Activated B cell treated with CpG ODN at 0.5 μM for 24 hours (primary cell): ENCODE measurements at regions of chr12 and their contacts with region 1.

Region 1: GRCh38 chr12:90013409-90013808 is 304.8 kb upstream of the ATP2B1 start:
- DNase-seq: no peak
- ATAC-seq: peak; percentile 90
- H3K4me3 Mint-ChIP-seq: no peak overlapping the region
- H3K27ac Mint-ChIP-seq: no peak overlapping the region
- H3K4me1 Mint-ChIP-seq: peaks cover 16% of the 10 kb centered on the region
- H3K27me3 Mint-ChIP-seq: no peaks in the 10 kb centered on the region
- CTCF ChIP-seq: no peak

Region 2: DNA sequence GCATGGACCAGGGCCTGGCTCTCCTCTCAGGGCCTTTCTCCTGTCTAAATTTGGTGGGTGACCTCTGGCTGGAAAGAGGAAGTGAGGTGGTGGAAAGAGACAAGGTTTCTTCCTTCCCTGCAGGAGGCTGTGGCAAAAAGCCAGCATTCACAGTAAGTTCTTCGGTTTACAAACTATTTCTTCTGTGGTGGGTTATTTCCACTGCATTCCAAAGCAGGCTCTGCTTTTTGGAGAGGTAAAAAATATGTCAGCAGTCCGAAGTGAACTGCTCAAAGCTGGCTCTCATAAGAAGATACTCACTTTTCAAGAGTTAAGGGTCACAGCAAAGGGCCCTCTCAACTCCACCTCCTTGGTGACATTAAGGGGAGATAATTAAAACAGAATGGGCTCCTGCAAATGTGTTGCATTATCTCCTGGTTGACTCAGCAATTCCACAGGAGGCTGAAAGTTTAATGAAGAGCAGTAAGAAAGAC is 438.6 kb before region 1 on chr12:
- CTCF ChIA-PET with region 1: no interaction called
- POLR2A ChIA-PET with region 1: no interaction called
- intact Hi-C with region 1: no loop called
- DNase-seq: no peak
- ATAC-seq: no peak
- H3K4me3 Mint-ChIP-seq: no peak overlapping the region
- H3K27ac Mint-ChIP-seq: no peak overlapping the region
- H3K4me1 Mint-ChIP-seq: peaks cover 13% of the 10 kb centered on the region
- H3K27me3 Mint-ChIP-seq: no peaks in the 10 kb centered on the region
- CTCF ChIP-seq: no peak

Region 3: GRCh38 chr12:89618107-89618862 is 395.1 kb before region 1 on chr12:
- CTCF ChIA-PET with region 1: interaction called, 13 read pairs
- POLR2A ChIA-PET with region 1: no interaction called
- intact Hi-C with region 1: loop called (anchors 5 kb)
- DNase-seq: no peak
- ATAC-seq: peak; percentile 10
- H3K4me3 Mint-ChIP-seq: no peak overlapping the region
- H3K27ac Mint-ChIP-seq: peak overlapping the region; percentile 44
- H3K4me1 Mint-ChIP-seq: peaks cover 6% of the 10 kb centered on the region
- H3K27me3 Mint-ChIP-seq: no peaks in the 10 kb centered on the region
- CTCF ChIP-seq: no peak

Region 4: GRCh38 chr12:89856431-89856830 is 157.0 kb before region 1 on chr12:
- CTCF ChIA-PET with region 1: no interaction called
- POLR2A ChIA-PET with region 1: no interaction called
- intact Hi-C with region 1: loop called (anchors 5 kb)
- DNase-seq: no peak
- ATAC-seq: peak; percentile 86
- H3K4me3 Mint-ChIP-seq: peak overlapping the region; percentile 68
- H3K27ac Mint-ChIP-seq: peak overlapping the region; percentile 91
- H3K4me1 Mint-ChIP-seq: peaks cover 64% of the 10 kb centered on the region
- H3K27me3 Mint-ChIP-seq: no peaks in the 10 kb centered on the region
- CTCF ChIP-seq: no peak

Region 5: DNA sequence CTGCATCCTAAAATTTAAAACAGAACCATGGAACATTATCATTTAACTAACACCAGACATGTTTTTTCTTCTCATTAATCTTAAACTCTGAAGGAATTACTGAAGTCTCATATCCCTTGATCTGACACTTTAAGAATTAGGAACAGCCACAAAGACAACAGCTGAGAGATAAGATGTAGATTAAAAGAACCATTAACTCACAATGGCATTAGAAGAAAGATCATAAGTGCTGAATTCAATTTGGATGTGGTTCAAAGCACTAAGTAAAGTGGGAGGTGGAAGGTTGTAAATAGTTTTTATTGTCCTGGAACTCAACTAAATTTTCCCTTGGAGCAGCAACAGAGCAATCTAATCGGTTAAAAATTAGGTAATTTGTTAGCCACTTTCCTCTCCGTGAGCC is 105.8 kb before region 1 on chr12:
- CTCF ChIA-PET with region 1: no interaction called
- POLR2A ChIA-PET with region 1: no interaction called
- intact Hi-C with region 1: no loop called
- DNase-seq: no peak
- ATAC-seq: no peak
- H3K4me3 Mint-ChIP-seq: no peak overlapping the region
- H3K27ac Mint-ChIP-seq: no peak overlapping the region
- H3K4me1 Mint-ChIP-seq: no peaks in the 10 kb centered on the region
- H3K27me3 Mint-ChIP-seq: no peaks in the 10 kb centered on the region
- CTCF ChIP-seq: no peak

Region 6: DNA sequence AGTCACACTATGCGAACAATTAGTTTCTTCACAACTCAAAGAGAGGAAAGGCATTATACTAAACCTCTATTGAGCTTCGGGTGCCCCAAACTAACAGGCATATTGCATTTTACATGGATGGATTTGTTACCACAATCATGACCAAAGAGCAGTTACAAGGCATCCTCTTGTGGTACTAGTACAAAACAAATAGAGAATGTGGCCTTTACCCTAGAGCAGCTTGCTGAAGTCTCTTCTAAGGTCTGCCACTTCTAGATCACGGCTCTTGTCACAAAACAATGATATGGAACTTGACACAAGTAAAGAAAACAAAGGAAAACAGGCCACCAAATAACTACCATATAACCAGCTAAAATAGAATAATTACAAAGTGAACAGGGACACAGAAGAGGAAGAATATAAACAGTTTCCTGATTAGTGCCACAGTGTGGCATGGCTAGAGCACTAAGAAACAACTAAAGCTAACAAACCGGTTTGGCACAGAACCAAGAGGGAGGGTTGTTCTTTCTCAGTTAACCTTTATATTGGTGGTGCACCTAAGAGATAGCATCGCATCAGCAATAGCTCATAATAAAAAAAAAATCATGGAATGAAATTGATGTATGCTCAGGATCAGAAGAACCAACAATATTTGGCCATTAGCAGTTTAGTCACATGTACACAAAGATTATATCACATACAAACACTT is 95.1 kb before region 1 on chr12:
- CTCF ChIA-PET with region 1: no interaction called
- POLR2A ChIA-PET with region 1: no interaction called
- intact Hi-C with region 1: no loop called
- DNase-seq: no peak
- ATAC-seq: no peak
- H3K4me3 Mint-ChIP-seq: no peak overlapping the region
- H3K27ac Mint-ChIP-seq: peak overlapping the region; percentile 64
- H3K4me1 Mint-ChIP-seq: peaks cover 39% of the 10 kb centered on the region
- H3K27me3 Mint-ChIP-seq: no peaks in the 10 kb centered on the region
- CTCF ChIP-seq: no peak

Region 7: GRCh38 chr12:89960011-89960507 is 53.4 kb before region 1 on chr12:
- CTCF ChIA-PET with region 1: interaction called, 12 read pairs
- POLR2A ChIA-PET with region 1: no interaction called
- intact Hi-C with region 1: no loop called
- DNase-seq: no peak
- ATAC-seq: peak; percentile 92
- H3K4me3 Mint-ChIP-seq: peak overlapping the region; percentile 74
- H3K27ac Mint-ChIP-seq: peak overlapping the region; percentile 85
- H3K4me1 Mint-ChIP-seq: peaks cover 38% of the 10 kb centered on the region
- H3K27me3 Mint-ChIP-seq: no peaks in the 10 kb centered on the region
- CTCF ChIP-seq: no peak